ENCODE measurements at regions of chr3 and their contacts with region 1.

Region 1: GRCh38 chr3:81173514-81173913 is 587.9 kb downstream of the GBE1 start:
- DNase-seq: peak in 1 of 2 experiments; percentile 11
- H3K4me3 ChIP-seq: no peak overlapping the region
- H3K4me3 Mint-ChIP-seq: no peak overlapping the region
- H3K27ac Mint-ChIP-seq: no peak overlapping the region
- H3K4me1 ChIP-seq: peaks cover 9% of the 10 kb centered on the region; the same call in 1 of the 2 replicates
- H3K4me1 Mint-ChIP-seq: peaks cover 9% of the 10 kb centered on the region
- H3K27me3 ChIP-seq: no peaks in the 10 kb centered on the region
- H3K27me3 Mint-ChIP-seq: no peaks in the 10 kb centered on the region
- CTCF ChIP-seq: peak in 1 of 2 experiments; percentile 13

Region 2: DNA sequence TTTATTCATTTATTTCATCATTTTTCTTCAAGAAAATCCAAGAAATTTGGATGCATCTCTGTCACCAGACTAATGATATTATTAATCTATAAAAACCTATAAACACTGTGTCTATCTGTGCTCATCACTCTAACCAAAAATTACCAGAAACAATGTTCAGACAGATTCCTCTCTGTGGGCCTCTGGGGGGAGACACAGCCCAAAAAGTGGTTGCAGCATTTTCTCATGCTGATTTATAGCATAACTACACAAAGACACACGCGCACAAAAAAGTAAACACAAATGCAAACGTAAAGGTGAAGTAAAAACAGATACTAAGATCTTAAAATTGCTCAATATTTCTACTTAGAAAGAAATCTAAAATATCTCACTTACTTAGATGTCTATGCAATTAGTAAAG is 388.0 kb before region 1 on chr3:
- CTCF ChIA-PET with region 1: no interaction called
- POLR2A ChIA-PET with region 1: no interaction called
- intact Hi-C with region 1: loop called (anchors 1 kb)
- DNase-seq: peak; percentile 40 to 41
- H3K4me3 ChIP-seq: no peak overlapping the region
- H3K4me3 Mint-ChIP-seq: no peak overlapping the region
- H3K27ac Mint-ChIP-seq: no peak overlapping the region
- H3K4me1 ChIP-seq: no peaks in the 10 kb centered on the region
- H3K4me1 Mint-ChIP-seq: no peaks in the 10 kb centered on the region
- H3K27me3 ChIP-seq: no peaks in the 10 kb centered on the region
- H3K27me3 Mint-ChIP-seq: no peaks in the 10 kb centered on the region
- CTCF ChIP-seq: peak; percentile 51 to 64

Region 3: GRCh38 chr3:80914854-80915253 is 258.7 kb before region 1 on chr3:
- CTCF ChIA-PET with region 1: no interaction called
- POLR2A ChIA-PET with region 1: no interaction called
- intact Hi-C with region 1: no loop called
- DNase-seq: no peak
- H3K4me3 ChIP-seq: no peak overlapping the region
- H3K4me3 Mint-ChIP-seq: no peak overlapping the region
- H3K27ac Mint-ChIP-seq: no peak overlapping the region
- H3K4me1 ChIP-seq: no peaks in the 10 kb centered on the region
- H3K4me1 Mint-ChIP-seq: no peaks in the 10 kb centered on the region
- H3K27me3 ChIP-seq: no peaks in the 10 kb centered on the region
- H3K27me3 Mint-ChIP-seq: no peaks in the 10 kb centered on the region
- CTCF ChIP-seq: no peak

Region 4: DNA sequence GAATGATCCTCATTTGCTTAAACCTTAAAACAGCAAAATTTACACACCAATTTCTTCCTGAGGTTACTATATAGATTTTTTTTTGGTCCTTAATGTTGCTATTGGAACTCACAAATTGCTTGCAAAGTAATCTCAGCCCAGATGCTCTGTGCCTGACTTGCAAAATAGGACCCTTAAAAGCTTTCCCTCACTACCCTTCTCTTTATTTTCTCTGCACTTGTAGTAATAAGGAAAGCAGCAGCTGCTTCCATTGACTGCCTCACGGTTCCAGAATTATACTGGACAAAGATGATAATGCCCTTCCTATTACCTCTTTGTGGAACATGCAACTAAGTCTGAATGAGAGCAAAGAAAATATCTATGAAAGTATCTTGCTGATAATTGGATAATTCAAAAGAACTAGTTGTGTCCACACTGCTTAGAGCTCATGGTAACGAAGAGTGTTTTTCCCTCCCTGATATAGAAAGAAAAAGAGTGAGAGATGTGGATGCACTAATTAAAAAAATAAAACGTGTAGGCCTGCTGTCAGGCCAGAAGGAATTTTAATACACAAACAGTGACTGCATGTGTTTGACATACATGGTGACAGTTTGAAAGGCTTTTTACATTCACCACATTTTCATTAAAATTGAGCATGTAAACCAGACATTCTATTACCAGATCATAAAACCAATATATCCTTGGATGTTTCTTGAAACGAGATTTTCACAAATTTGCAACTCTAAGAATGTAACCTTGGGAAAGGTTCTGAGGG is 195.1 kb before region 1 on chr3:
- CTCF ChIA-PET with region 1: no interaction called
- POLR2A ChIA-PET with region 1: no interaction called
- intact Hi-C with region 1: no loop called
- DNase-seq: no peak
- H3K4me3 ChIP-seq: no peak overlapping the region
- H3K4me3 Mint-ChIP-seq: no peak overlapping the region
- H3K27ac Mint-ChIP-seq: no peak overlapping the region
- H3K4me1 ChIP-seq: no peaks in the 10 kb centered on the region; the same call in 1 of the 2 replicates
- H3K4me1 Mint-ChIP-seq: peaks cover 6% of the 10 kb centered on the region
- H3K27me3 ChIP-seq: no peaks in the 10 kb centered on the region
- H3K27me3 Mint-ChIP-seq: no peaks in the 10 kb centered on the region
- CTCF ChIP-seq: no peak

Region 5: DNA sequence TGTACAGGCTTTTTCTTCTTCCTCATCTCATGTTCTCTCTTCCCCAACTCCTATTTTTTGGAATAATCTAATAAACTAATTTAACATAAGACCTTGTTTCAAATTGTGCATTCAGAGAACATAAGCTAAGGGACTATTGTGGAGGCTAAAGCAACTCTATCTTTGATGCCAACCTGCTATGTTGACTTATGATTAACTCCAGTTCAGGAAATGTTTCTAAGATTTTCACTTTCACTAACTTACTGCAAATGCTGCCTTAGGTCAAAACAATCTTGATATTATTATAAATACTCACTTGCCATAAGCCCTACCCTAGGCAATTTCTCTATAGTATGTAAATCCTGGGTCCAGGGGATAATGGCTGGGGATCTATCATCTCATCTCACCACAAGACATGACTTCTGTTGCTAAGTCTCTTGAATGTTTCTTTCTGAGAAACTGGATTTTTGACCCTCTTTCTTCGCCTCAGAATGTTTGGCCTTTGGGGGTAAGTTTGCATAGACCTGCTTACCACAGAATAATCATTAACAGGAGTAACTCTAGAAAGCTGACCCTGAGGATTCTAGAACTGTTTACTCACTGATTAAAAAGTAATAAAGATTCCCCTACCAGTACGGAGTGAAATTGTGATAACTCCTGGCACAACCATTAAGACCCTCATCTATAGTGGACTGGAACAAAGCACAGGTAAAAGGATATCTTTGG is 180.1 kb before region 1 on chr3:
- CTCF ChIA-PET with region 1: no interaction called
- POLR2A ChIA-PET with region 1: no interaction called
- intact Hi-C with region 1: loop called (anchors 5 kb)
- DNase-seq: peak in 1 of 2 experiments; percentile 27
- H3K4me3 ChIP-seq: no peak overlapping the region
- H3K4me3 Mint-ChIP-seq: no peak overlapping the region
- H3K27ac Mint-ChIP-seq: peak overlapping the region; percentile 51
- H3K4me1 ChIP-seq: peaks cover 47% of the 10 kb centered on the region
- H3K4me1 Mint-ChIP-seq: peaks cover 31% of the 10 kb centered on the region
- H3K27me3 ChIP-seq: no peaks in the 10 kb centered on the region
- H3K27me3 Mint-ChIP-seq: no peaks in the 10 kb centered on the region
- CTCF ChIP-seq: no peak

Measured in Caco-2 (cell line).